ENCODE measurements at regions of chr20 and their contacts with region 1.

Region 1: DNA sequence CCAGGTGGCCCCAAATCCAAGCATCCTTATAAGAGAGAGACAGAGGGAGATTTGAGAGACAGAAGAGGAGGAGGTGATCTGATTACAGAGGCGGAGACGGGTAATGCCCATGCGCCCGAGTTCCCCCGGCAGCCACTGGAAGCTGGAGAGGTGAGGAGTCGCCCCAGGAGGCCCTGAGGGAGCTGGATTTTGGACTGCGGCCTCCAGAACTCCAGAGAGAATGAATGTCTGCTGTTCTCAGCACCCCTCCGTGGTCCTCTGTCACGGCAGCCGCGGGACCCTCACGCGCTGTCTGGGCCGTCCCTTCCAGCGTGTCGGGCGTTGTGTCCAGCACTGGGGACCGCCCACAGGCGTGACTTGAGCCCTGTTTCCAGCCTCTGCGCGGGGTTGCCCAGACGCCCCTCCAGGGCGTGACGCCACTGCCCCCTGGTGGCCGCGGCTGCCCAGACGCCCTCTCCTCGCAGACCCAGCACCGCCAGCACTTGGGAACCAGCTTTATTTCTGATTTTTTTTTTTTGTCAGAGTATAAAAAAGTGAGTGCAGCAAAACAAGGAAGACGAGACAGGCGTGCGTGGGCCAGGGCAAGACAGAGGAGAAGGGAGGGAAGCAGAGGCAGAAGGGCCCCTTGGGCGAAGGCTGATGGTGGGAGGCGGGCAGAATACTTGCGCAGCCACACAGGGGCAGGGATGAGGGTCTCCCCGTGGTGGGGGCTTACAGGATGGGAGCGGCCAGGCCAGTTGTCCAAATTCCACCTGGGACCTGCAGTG is 4.1 kb upstream of the ZNF512B start:
- DNase-seq: peak; percentile 82 to 90
- H3K4me3 ChIP-seq: peak overlapping the region; percentile 33 to 41
- H3K27ac ChIP-seq: peak overlapping the region in 1 of 2 donors; percentile 28
- H3K4me1 ChIP-seq: peaks cover 0 to 33% (median 21%) of the 10 kb centered on the region in 4 donors
- H3K27me3 ChIP-seq: no peaks in the 10 kb centered on the region
- CTCF ChIP-seq: peak; percentile 97 to 98

Region 2: GRCh38 chr20:63537525-63538203 is 436.2 kb before region 1 on chr20:
- intact Hi-C with region 1: loop called (anchors 1 kb)
- DNase-seq: peak; percentile 75 to 87
- H3K4me3 ChIP-seq: peak overlapping the region; percentile 9 to 10
- H3K27ac ChIP-seq: no peak overlapping the region
- H3K4me1 ChIP-seq: peaks cover 0 to 36% (median 8%) of the 10 kb centered on the region in 4 donors
- H3K27me3 ChIP-seq: peaks cover 0 to 81% of the 10 kb centered on the region in 2 donors
- CTCF ChIP-seq: peak; percentile 95 to 96

Region 3: DNA sequence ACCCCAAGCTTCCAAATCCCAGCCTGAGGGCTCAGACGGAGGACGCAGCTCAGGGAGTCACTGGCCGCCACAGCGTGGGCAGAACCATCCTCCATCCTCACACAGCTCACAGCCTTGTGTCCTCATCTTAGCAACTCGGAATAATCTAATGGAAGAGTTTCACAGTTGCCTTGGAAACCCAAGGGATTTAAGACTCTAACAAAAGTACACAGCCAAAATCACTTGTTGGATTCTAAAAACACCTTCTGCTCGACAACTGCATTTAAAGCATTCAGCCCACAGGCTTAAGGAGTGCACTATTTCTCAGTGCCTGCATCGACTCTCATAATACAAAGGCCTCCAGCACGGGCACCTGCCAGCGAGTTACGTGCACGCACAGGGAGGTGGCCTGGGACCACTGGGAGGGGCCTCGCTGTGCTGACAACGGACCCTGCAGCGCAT is 188.1 kb before region 1 on chr20:
- intact Hi-C with region 1: loop called (anchors 5 kb)
- DNase-seq: no peak
- H3K4me3 ChIP-seq: no peak overlapping the region
- H3K27ac ChIP-seq: no peak overlapping the region
- H3K4me1 ChIP-seq: no peaks in the 10 kb centered on the region
- H3K27me3 ChIP-seq: no peaks in the 10 kb centered on the region
- CTCF ChIP-seq: no peak

Measured in tibial artery (tissue), 4 donors.